ENCODE measurements at regions of chr11 and their contacts with region 1.

Region 1: GRCh38 chr11:31958076-31958735 is 132.7 kb upstream of the RCN1 start:
- DNase-seq: peak; percentile 56 to 80
- ATAC-seq: peak; percentile 84 to 93 (median 87)
- H3K4me3 ChIP-seq: no peak overlapping the region
- H3K27ac ChIP-seq: no peak overlapping the region
- H3K4me1 ChIP-seq: peaks cover 0 to 8% (median 0%) of the 10 kb centered on the region in 9 donors
- H3K27me3 ChIP-seq: no peaks in the 10 kb centered on the region
- CTCF ChIP-seq: peak; percentile 49 to 88 (median 78)

Region 2: GRCh38 chr11:31240338-31240904 is 717.8 kb before region 1 on chr11:
- intact Hi-C with region 1: loop called in 3 of 10 experiments (anchors 10 kb)
- DNase-seq: peak in 1 of 2 donors; percentile 9
- ATAC-seq: peak in 1 of 8 donors; percentile 53
- H3K4me3 ChIP-seq: no peak overlapping the region
- H3K27ac ChIP-seq: no peak overlapping the region
- H3K4me1 ChIP-seq: no peaks in the 10 kb centered on the region
- H3K27me3 ChIP-seq: no peaks in the 10 kb centered on the region
- CTCF ChIP-seq: peak in 7 of 9 donors; percentile 44 to 66 (median 59)

Region 3: DNA sequence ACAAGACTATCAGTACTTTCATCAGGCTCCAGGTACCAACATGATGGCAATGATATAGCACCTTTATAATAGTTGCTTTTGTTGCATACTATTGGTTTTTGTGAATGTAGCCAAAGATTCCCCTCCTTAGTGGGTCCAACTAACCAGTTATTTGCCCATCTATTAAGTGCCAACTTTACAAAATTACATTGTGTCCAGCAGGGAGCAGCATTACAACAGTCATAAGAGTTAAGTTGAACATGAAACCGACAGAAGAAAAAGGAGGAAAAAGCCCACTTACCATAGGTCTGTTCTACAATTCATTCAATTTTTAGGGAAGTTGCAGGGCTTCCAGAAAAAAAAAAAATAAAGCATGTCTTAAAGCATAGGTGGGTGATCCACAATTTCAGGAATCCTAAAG is 470.4 kb before region 1 on chr11:
- intact Hi-C with region 1: loop called in 3 of 10 experiments (anchors 5 to 10 kb)
- DNase-seq: no peak
- ATAC-seq: no peak
- H3K4me3 ChIP-seq: no peak overlapping the region
- H3K27ac ChIP-seq: no peak overlapping the region
- H3K4me1 ChIP-seq: peaks cover 0 to 10% (median 0%) of the 10 kb centered on the region in 9 donors
- H3K27me3 ChIP-seq: no peaks in the 10 kb centered on the region
- CTCF ChIP-seq: peak in 7 of 9 donors; percentile 28 to 54 (median 45)

Region 4: DNA sequence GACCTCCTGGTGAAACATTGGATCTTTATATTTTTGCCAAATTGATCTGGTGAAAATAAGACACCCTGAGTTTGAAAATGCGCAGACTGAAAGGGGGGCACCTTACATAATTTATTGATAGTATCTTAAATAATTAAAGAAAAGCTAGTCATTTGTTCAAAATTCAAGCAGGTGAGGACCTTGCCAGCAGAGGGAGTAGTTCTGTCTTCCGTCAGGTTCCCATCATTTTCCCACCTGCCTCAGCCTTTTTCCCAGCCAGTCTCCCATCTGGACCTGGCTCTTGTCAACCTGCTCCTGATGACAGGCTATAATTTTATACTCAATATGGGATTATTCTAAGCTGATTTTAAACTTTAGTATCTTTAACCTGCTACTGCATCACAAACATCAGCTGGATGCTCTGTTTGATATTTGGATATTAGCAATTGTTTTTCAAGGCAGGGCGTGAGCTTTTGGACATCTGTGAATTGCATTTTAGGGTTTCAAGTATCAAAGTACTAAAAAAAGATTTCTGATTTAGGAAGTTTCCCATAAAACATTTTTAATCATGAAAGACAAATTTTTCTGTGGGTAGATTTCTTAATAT is 316.6 kb before region 1 on chr11:
- intact Hi-C with region 1: loop called in 4 of 10 experiments (anchors 2 to 10 kb)
- DNase-seq: peak in 1 of 2 donors; percentile 4
- ATAC-seq: no peak
- H3K4me3 ChIP-seq: no peak overlapping the region
- H3K27ac ChIP-seq: no peak overlapping the region
- H3K4me1 ChIP-seq: peaks cover 0 to 27% (median 13%) of the 10 kb centered on the region in 9 donors
- H3K27me3 ChIP-seq: no peaks in the 10 kb centered on the region
- CTCF ChIP-seq: peak; percentile 32 to 64 (median 58)

Region 5: DNA sequence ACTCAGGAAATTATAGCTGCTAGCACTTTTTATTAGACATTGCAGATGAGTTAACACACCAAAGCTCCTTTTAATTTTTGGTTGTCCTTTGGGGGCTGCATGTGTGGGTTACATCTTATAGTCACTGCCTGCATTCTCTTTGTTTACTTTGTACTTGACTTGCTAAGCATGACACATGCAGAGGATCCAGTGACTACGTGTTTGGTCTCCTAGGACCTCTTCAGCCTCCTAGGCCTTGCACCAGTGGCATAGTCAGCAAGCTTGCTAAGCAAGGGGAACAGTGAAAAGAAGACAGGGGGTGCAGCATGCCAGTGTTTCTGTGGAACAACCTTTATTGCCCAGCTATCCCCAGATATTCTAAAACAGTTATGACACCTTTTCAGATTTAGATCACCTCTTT is 255.2 kb before region 1 on chr11:
- intact Hi-C with region 1: no loop called
- DNase-seq: no peak
- ATAC-seq: no peak
- H3K4me3 ChIP-seq: no peak overlapping the region
- H3K27ac ChIP-seq: no peak overlapping the region
- H3K4me1 ChIP-seq: no peaks in the 10 kb centered on the region
- H3K27me3 ChIP-seq: no peaks in the 10 kb centered on the region
- CTCF ChIP-seq: no peak

Region 6: DNA sequence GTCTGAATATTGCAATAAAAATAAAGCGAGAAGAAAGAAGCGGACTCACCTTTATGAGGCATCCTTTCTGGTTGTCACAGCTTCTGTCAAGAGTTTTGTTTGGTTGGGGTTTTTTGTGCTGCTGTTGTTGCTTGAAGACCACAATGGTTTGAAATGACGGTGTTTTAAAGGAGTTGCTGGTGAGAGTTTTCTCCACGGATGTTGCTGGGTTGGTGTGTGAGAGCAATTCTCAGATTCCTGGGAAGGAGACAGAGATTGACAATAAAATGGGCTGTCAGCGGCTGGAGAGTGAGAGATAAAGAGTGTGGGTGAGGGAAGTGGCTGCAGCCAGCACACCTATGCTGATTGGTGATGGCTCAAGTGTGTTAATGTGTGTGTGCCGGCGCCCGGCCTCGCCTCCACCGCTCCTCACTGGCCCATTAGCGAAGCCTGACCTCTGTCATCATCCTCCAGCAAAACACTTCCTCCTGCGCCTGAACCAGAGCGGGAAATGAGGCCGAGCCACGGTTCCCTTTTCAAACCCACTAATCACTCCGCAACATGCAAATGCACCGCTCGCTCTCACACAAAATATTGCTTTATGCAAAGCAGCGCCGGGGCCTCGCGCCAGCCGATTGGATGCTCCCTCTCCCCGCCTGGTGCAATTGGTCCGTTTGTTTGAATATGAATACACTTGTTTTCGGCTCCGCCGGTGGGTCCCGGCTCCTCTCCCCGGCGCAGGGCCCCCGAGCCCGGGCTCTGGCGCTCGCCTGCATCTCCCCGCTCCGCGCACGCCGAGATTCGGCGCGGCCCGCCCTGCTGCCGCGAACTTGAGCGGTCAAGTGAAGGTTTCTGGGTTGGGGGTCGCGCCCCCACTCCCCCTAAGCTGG is 147.2 kb before region 1 on chr11 and contains the start of gene PAX6:
- intact Hi-C with region 1: loop called in 1 of 10 experiments (anchors 10 kb)
- DNase-seq: no peak
- ATAC-seq: peak in 5 of 8 donors; percentile 16 to 31 (median 25)
- H3K4me3 ChIP-seq: peak within 1 kb of the TSS; percentile 24 to 51 (median 45)
- H3K27ac ChIP-seq: no peak within 1 kb of the TSS
- H3K4me1 ChIP-seq: peaks cover 30 to 72% (median 61%) of the 10 kb centered on the region in 9 donors
- H3K27me3 ChIP-seq: peaks cover 83 to 100% (median 99%) of the 10 kb centered on the region in 7 donors
- CTCF ChIP-seq: no peak
- total RNA-seq, gene PAX6: not detected

Region 7: GRCh38 chr11:31921081-31921480 is 37.1 kb before region 1 on chr11:
- intact Hi-C with region 1: no loop called
- DNase-seq: no peak
- ATAC-seq: no peak
- H3K4me3 ChIP-seq: no peak overlapping the region
- H3K27ac ChIP-seq: no peak overlapping the region
- H3K4me1 ChIP-seq: no peaks in the 10 kb centered on the region
- H3K27me3 ChIP-seq: no peaks in the 10 kb centered on the region
- CTCF ChIP-seq: no peak